ENCODE measurements at regions of chr19 and their contacts with region 1.

Region 1: GRCh38 chr19:32224371-32225244 is 120.8 kb upstream of the ZNF507 start:
- DNase-seq: no peak
- ATAC-seq: peak; percentile 89
- H3K4me3 ChIP-seq: no peak overlapping the region
- H3K27ac ChIP-seq: no peak overlapping the region
- H3K4me1 ChIP-seq: no peaks in the 10 kb centered on the region
- H3K27me3 ChIP-seq: peaks cover 5% of the 10 kb centered on the region; the same call in 1 of the 2 replicates
- CTCF ChIP-seq: peak; percentile 47 to 97 (median 96)
- POLR2A ChIP-seq: no peak
- RAD21 ChIP-seq: peak; percentile 76

Region 2: DNA sequence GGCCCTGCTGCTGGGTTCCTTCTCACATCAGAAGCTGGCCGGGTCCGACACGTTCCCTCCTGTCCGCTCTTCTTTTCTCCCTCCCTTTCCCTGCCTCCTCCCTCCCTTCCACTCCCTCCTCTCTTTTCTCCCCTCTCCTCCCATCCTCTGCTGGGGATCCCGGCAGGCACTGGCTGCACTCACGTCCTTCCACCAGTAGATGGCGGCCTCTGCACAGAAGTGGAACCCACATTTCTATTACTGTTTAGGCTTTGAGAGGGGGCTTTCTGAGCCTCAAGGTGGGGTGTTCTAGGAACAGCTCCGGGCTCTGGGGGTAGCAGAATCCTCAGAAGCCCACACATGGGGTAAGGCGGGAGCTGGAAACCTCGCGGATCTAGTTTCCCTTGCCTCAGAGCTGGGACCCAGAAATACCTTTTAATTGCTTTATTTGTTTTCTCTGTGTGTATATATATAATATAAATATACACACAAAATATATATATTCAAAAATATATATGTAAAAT is 1558.3 kb before region 1 on chr19:
- CTCF ChIA-PET with region 1: interaction called, 3 read pairs
- POLR2A ChIA-PET with region 1: no interaction called
- RAD21 ChIA-PET with region 1: no interaction called
- intact Hi-C with region 1: loop called (anchors 2 kb)
- DNase-seq: no peak
- ATAC-seq: peak; percentile 65
- H3K4me3 ChIP-seq: no peak overlapping the region
- H3K27ac ChIP-seq: no peak overlapping the region
- H3K4me1 ChIP-seq: no peaks in the 10 kb centered on the region
- H3K27me3 ChIP-seq: no peaks in the 10 kb centered on the region
- CTCF ChIP-seq: peak; percentile 30 to 96 (median 95); a peak in 5 of 6 replicates
- POLR2A ChIP-seq: no peak
- RAD21 ChIP-seq: peak; percentile 60

Region 3: GRCh38 chr19:30682999-30683536 is 1541.5 kb before region 1 on chr19:
- CTCF ChIA-PET with region 1: interaction called, 7 read pairs
- POLR2A ChIA-PET with region 1: no interaction called
- RAD21 ChIA-PET with region 1: no interaction called
- intact Hi-C with region 1: loop called (anchors 1 kb)
- DNase-seq: peak; percentile 12
- ATAC-seq: peak; percentile 83
- H3K4me3 ChIP-seq: no peak overlapping the region
- H3K27ac ChIP-seq: no peak overlapping the region
- H3K4me1 ChIP-seq: no peaks in the 10 kb centered on the region
- H3K27me3 ChIP-seq: peaks cover 4% of the 10 kb centered on the region; the same call in 1 of the 2 replicates
- CTCF ChIP-seq: peak; percentile 53 to 96 (median 79); a peak in 5 of 6 replicates
- POLR2A ChIP-seq: no peak
- RAD21 ChIP-seq: peak; percentile 73

Region 4: DNA sequence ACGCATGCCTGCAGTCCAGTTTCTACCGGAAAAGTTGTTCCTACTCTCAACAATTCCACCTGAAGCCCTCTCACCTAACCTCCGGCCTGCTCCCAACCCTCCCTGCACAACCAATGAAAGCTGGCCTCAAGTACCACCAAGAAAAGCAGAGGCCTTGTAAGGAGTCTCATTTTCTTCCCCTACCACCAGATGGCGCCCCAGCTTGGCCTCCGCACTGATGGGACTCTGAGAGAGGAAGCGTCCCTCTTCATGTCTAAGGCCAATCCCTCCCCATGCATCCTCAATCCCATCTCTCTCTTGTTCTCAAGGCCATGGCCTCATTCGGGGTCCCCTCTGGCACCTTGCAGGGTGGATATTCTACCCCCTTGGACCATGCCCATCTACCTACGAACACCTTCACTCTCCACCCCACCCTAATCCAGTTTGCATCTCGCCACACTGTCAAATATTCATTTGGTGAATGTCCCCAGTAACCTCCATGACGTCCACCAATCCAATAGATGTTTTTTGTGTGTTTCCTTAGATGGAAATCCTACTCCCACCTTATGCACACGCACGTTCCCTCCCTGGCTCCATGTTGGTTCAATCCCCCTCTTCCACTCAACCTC is 1439.7 kb before region 1 on chr19:
- CTCF ChIA-PET with region 1: no interaction called
- POLR2A ChIA-PET with region 1: no interaction called
- RAD21 ChIA-PET with region 1: no interaction called
- intact Hi-C with region 1: loop called (anchors 10 kb)
- DNase-seq: no peak
- ATAC-seq: no peak
- H3K4me3 ChIP-seq: no peak overlapping the region
- H3K27ac ChIP-seq: no peak overlapping the region
- H3K4me1 ChIP-seq: no peaks in the 10 kb centered on the region
- H3K27me3 ChIP-seq: no peaks in the 10 kb centered on the region
- CTCF ChIP-seq: peak in 2 of 3 experiments; percentile 40 to 47; a peak in 3 of 6 replicates
- POLR2A ChIP-seq: no peak
- RAD21 ChIP-seq: peak; percentile 21; the same call in 1 of the 2 replicates

Region 5: DNA sequence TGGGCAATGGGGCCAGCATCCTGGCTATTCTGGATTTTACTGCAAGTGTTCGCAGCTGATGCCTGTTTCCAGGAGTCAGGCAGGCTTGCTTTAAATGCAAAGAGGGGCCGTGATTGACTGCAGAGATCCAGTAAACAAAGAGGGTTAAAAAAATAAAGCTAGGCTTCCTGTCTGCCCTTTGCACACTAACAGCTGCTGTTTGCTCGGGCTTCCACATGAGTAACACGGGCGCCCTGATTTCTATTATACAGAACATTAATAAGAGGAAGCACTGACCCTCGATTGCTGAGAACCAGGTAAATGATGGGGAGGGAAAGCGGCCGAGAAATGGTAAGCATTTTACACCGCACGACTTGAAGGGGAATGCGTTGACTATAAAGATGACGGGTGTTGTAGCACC is 133.4 kb before region 1 on chr19:
- CTCF ChIA-PET with region 1: no interaction called
- POLR2A ChIA-PET with region 1: no interaction called
- RAD21 ChIA-PET with region 1: no interaction called
- intact Hi-C with region 1: no loop called
- DNase-seq: no peak
- ATAC-seq: no peak
- H3K4me3 ChIP-seq: no peak overlapping the region
- H3K27ac ChIP-seq: no peak overlapping the region
- H3K4me1 ChIP-seq: no peaks in the 10 kb centered on the region
- H3K27me3 ChIP-seq: no peaks in the 10 kb centered on the region
- CTCF ChIP-seq: no peak
- POLR2A ChIP-seq: no peak
- RAD21 ChIP-seq: no peak

Region 6: GRCh38 chr19:32241932-32242710 is 17.5 kb after region 1 on chr19:
- CTCF ChIA-PET with region 1: no interaction called
- POLR2A ChIA-PET with region 1: no interaction called
- RAD21 ChIA-PET with region 1: no interaction called
- intact Hi-C with region 1: no loop called
- DNase-seq: no peak
- ATAC-seq: no peak
- H3K4me3 ChIP-seq: no peak overlapping the region
- H3K27ac ChIP-seq: no peak overlapping the region
- H3K4me1 ChIP-seq: no peaks in the 10 kb centered on the region
- H3K27me3 ChIP-seq: no peaks in the 10 kb centered on the region
- CTCF ChIP-seq: no peak
- POLR2A ChIP-seq: no peak
- RAD21 ChIP-seq: no peak

Measured in HCT116 (cell line).